HCT116 (cell line): ENCODE measurements at regions of chr17 and their contacts with region 1.

Region 1: GRCh38 chr17:82037113-82037888 is at the start of gene DCXR:
- DNase-seq: peak; percentile 96
- ATAC-seq: peak; percentile 89
- H3K4me3 ChIP-seq: peak within 1 kb of the TSS; percentile 92 to 93
- H3K27ac ChIP-seq: peak within 1 kb of the TSS; percentile 91
- H3K4me1 ChIP-seq: peaks cover 18 to 48% of the 10 kb centered on the region in 2 experiments
- H3K27me3 ChIP-seq: no peaks in the 10 kb centered on the region
- CTCF ChIP-seq: peak; percentile 66 to 91 (median 79)
- POLR2A ChIP-seq: peak; percentile 88
- RAD21 ChIP-seq: no peak
- total RNA-seq, gene DCXR: 306 TPM

Region 2: DNA sequence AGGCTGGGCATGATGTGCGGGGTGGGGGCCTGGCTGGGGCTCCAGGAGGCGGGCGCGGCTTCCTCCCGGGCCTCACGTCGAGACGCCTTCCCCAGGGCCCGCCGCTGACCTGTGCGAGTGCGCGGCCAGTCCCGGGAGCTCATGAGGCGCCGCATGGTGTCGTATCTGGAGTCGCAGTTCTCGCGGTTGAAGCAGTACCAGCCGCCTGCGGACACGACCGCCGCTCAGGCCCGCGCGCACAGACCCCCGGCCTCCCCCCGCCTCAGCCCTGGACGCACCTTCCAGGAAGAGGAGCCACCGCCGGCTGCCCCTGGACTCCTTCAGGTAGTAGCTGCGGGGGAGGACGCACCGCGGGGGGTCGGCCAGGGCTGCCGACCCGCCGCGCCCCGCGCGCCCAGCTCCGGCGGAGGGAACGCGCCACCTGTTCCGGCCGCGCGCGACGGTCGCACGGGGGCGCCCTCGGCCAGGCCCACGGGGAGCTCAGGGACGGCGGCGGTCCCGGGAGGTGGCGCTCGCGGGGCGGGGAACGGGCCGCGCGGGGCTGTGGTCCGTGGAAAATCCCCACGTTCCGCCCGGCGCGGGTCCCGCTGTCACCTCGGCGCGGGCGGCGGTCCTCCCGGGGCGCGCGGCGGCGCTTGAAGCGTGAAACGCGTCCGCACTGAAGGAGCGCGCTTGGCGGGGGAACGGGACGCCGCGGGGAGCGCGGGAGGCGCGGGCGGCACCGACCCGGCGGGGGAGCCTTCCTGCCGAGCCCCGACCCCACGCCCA is 77.8 kb before region 1 on chr17:
- CTCF ChIA-PET with region 1: interaction called, 10 read pairs
- POLR2A ChIA-PET with region 1: no interaction called
- RAD21 ChIA-PET with region 1: interaction called in 1 of 2 experiments, 10 read pairs
- intact Hi-C with region 1: no loop called
- DNase-seq: no peak
- ATAC-seq: peak; percentile 77
- H3K4me3 ChIP-seq: peak overlapping the region; percentile 50 to 69
- H3K27ac ChIP-seq: peak overlapping the region; percentile 67; the same call in 1 of the 2 replicates
- H3K4me1 ChIP-seq: peaks cover 11 to 22% of the 10 kb centered on the region in 2 experiments
- H3K27me3 ChIP-seq: no peaks in the 10 kb centered on the region
- CTCF ChIP-seq: peak; percentile 58 to 97 (median 67)
- POLR2A ChIP-seq: no peak
- RAD21 ChIP-seq: peak; percentile 90

Region 3: DNA sequence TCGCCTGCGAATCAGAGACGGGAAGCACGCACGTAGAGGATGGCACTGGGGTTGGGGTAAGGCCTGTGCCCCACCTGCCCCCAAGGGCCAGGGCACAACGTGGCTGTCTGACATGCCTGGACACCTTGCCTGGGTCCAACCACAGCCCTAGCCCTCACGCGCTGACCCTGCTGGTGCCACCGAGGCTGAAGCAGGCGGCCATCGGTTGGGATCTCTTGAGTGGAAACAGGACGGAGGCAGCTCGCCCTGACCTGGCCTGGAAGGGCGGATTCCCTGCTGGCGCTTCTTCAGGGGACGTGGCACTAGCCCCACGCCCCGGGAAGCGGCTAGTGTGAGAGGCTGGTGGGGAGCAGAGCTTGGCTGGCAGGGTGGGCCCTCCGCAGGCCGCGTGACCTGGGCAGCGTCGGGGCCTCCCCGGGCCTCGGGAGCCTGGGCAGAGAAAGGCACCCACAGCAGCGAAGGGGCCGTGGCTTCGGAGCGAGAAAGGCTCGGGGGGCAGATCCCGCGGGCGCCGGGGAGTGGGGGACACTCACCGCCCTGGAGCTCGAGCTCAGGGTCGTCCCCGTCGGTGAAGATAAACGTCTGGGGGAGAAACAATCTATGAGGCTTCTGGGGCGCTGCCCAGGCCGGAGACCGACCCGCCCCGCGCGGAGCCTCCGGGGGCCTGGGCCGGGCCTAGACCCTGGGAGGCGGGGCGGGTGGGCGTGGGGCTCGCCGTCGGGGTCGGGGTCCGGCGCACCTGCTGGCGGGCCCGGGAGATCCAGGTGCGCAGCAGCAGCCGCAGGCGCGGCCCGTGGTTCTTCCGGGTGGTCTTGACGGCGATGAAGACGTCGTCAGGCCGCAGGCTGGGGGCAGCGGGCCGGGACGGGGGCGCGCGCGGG is 13.7 kb after region 1 on chr17:
- CTCF ChIA-PET with region 1: interaction called, 10 read pairs
- POLR2A ChIA-PET with region 1: interaction called, 4 read pairs
- RAD21 ChIA-PET with region 1: no interaction called
- intact Hi-C with region 1: no loop called
- DNase-seq: no peak
- ATAC-seq: peak; percentile 28
- H3K4me3 ChIP-seq: peak overlapping the region; percentile 94 to 99
- H3K27ac ChIP-seq: peak overlapping the region; percentile 81
- H3K4me1 ChIP-seq: peaks cover 13 to 34% of the 10 kb centered on the region in 2 experiments; a peak in 3 of 4 replicates
- H3K27me3 ChIP-seq: no peaks in the 10 kb centered on the region
- CTCF ChIP-seq: no peak
- POLR2A ChIP-seq: no peak
- RAD21 ChIP-seq: no peak

Region 4: DNA sequence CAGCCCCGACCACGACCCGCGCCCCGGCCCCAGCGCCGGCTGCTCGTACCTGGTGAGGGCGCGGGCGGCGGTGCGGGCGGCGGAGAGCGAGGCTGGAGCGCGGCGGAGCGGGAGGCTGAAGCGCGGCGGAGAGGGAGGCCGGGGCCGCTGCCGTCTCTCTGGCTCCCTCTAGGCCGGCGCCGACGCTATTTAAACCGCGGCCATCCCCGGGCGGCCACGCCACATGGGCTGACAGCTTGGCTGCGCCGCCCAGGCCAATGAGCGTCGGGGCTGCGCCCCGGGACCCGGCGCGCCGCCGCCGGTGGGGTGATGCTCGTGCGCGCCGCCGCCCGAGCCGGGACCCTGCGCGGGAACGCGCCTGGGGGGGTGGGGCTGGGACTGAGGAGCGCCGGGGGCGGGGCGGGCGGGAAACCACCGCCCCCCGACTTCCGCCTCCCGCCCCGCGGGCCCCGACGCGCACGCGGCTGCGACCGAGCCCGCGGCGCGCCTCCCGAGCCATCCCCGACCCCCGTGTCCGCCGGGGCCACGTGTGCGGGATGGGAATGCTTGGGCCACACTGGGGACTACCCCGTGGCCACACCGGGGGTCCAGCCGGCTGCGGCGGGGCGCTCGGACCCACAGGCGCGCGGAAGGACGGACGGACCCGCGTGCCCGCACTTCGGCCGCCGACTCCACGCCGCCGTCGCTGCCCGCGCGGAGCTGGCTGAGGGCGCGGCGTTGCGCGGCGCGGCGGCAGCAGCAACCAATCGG is 60.9 kb after region 1 on chr17 and contains the start of gene FASN:
- CTCF ChIA-PET with region 1: interaction called, 4 read pairs
- POLR2A ChIA-PET with region 1: interaction called, 8 read pairs
- RAD21 ChIA-PET with region 1: no interaction called
- intact Hi-C with region 1: loop called (anchors 2 kb)
- DNase-seq: peak; percentile 91
- ATAC-seq: peak; percentile 79
- H3K4me3 ChIP-seq: peak within 1 kb of the TSS; percentile 82 to 93
- H3K27ac ChIP-seq: peak within 1 kb of the TSS; percentile 99
- H3K4me1 ChIP-seq: peaks cover 21 to 50% of the 10 kb centered on the region in 2 experiments
- H3K27me3 ChIP-seq: no peaks in the 10 kb centered on the region
- CTCF ChIP-seq: peak in 2 of 3 experiments; percentile 16 to 35; a peak in 3 of 6 replicates
- POLR2A ChIP-seq: peak; percentile 94
- RAD21 ChIP-seq: no peak
- total RNA-seq, gene FASN: 754 TPM

Region 5: DNA sequence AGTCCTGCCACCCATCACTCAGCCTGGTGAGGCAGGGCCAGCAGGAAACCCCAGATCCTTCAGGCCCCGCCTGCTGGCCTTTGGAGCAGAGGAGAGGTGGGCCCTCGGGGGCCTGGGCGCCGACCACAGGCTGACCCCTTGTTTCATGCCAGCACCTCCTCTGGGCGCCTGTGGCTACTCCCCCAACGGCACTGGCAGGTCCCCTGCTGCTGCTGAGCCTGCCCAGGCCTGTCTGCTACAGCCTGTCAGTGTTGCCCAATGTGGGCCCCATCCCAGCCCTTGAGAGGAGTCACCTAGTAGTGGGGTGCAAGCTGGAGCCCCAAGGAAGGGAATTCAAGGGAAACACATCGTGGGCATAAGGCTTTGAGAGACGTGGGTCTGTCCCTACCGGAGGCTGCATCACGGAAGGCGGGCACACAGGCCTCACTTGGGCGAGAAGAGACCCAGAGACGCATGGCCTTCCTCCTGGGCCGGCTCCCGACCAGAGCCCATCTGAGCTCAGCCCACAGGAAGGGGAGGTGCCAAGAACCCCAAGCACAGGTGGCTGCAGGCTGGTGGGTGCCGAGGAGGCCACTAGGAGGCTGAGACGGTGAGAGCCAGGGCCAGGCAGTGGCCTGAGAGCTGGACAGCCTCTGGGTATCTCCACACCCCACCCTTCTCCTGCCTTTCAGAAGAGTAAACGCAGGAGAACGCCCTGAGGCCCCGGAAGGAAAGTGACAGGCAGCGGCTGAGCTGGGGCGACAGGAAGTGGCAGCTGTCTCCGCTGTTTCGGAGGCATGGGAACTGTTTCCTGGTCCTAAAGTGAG is 68.8 kb after region 1 on chr17:
- CTCF ChIA-PET with region 1: interaction called, 11 read pairs
- POLR2A ChIA-PET with region 1: interaction called, 3 read pairs
- RAD21 ChIA-PET with region 1: no interaction called
- intact Hi-C with region 1: no loop called
- DNase-seq: peak; percentile 82
- ATAC-seq: peak; percentile 95
- H3K4me3 ChIP-seq: peak overlapping the region; percentile 68 to 70
- H3K27ac ChIP-seq: peak overlapping the region; percentile 94
- H3K4me1 ChIP-seq: peaks cover 37 to 55% of the 10 kb centered on the region in 2 experiments
- H3K27me3 ChIP-seq: no peaks in the 10 kb centered on the region
- CTCF ChIP-seq: peak in 2 of 3 experiments; percentile 71 to 91; a peak in 4 of 6 replicates
- POLR2A ChIP-seq: peak; percentile 95
- RAD21 ChIP-seq: no peak

Region 6: GRCh38 chr17:82292251-82293154 is 255.2 kb after region 1 on chr17:
- CTCF ChIA-PET with region 1: no interaction called
- POLR2A ChIA-PET with region 1: no interaction called
- RAD21 ChIA-PET with region 1: no interaction called
- intact Hi-C with region 1: loop called (anchors 10 kb)
- DNase-seq: peak; percentile 99
- ATAC-seq: peak; percentile 92
- H3K4me3 ChIP-seq: peak overlapping the region; percentile 78 to 87
- H3K27ac ChIP-seq: peak overlapping the region; percentile 97
- H3K4me1 ChIP-seq: peaks cover 38 to 64% of the 10 kb centered on the region in 2 experiments
- H3K27me3 ChIP-seq: no peaks in the 10 kb centered on the region
- CTCF ChIP-seq: no peak
- POLR2A ChIP-seq: peak; percentile 96
- RAD21 ChIP-seq: no peak

Region 7: DNA sequence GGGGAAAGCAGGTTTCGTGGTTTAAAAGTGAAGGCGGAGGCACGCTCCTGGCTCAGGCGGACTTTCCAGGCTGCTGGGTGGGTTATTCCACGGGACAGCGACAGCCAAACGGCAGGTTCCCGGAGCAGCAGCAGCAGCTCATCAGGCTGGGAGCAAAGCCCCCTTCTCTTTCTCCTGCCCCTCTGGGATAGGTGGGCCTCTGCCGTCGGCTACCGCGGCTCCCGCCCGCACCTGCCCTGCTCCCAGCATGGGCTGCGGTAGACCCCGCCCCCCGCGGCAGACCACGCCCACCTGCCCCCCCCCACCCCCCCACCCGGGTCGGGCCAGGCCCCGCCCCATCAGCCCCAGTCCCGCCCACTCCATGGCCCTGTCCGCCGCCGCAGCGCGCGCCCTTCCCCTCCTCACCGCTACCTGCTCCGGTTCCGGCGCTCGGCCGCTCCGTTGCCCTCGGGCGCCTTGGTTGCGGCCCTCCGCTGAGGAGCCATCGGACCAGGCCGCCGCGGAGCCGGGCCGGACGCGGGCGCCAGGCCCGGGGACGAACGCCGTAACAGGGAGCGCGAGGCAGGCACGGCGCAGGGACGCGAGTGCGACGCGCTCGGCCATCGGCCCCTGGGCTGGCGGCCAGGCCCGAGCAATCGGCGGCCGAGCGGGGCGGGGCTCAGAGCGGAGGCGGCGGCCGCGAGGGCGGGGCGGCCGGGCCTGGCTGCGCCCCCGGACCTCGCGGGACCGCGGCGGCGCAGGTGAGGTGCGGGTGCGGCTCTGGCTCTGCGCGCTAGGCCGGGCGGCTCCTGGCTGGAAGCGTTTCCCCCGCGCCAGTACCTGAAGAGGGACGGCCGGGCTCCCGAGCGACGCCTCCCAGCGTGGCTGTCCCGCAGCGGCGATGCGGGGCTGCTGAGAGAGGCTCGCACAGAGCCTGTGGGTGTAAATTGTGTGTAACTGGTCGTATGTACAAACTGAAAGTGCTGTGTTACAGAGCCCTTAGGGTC is 381.0 kb after region 1 on chr17 and contains the starts of genes HEXD and OGFOD3:
- CTCF ChIA-PET with region 1: no interaction called
- POLR2A ChIA-PET with region 1: no interaction called
- RAD21 ChIA-PET with region 1: no interaction called
- intact Hi-C with region 1: loop called (anchors 10 kb)
- DNase-seq: peak; percentile 68
- ATAC-seq: peak; percentile 87
- H3K4me3 ChIP-seq: peak within 1 kb of the TSS; percentile 65 to 81
- H3K27ac ChIP-seq: peak within 1 kb of the TSS; percentile 98
- H3K4me1 ChIP-seq: peaks cover 7 to 23% of the 10 kb centered on the region in 2 experiments
- H3K27me3 ChIP-seq: no peaks in the 10 kb centered on the region
- CTCF ChIP-seq: no peak
- POLR2A ChIP-seq: peak; percentile 90
- RAD21 ChIP-seq: no peak
- total RNA-seq, gene HEXD: 45.2 TPM
- total RNA-seq, gene OGFOD3: 53.6 TPM